ENCODE measurements at regions of chr12 and their contacts with region 1.

Region 1: GRCh38 chr12:30754709-30755394 is at the start of gene CAPRIN2:
- DNase-seq: peak; percentile 96
- H3K4me3 ChIP-seq: peak within 1 kb of the TSS; percentile 84 to 94 (median 86)
- H3K27ac ChIP-seq: peak within 1 kb of the TSS; percentile 39
- H3K4me1 ChIP-seq: peaks cover 17% of the 10 kb centered on the region
- H3K27me3 ChIP-seq: no peaks in the 10 kb centered on the region
- CTCF ChIP-seq: peak; percentile 2 to 53
- total RNA-seq, gene CAPRIN2: 17.2 to 38.0 TPM

Region 2: DNA sequence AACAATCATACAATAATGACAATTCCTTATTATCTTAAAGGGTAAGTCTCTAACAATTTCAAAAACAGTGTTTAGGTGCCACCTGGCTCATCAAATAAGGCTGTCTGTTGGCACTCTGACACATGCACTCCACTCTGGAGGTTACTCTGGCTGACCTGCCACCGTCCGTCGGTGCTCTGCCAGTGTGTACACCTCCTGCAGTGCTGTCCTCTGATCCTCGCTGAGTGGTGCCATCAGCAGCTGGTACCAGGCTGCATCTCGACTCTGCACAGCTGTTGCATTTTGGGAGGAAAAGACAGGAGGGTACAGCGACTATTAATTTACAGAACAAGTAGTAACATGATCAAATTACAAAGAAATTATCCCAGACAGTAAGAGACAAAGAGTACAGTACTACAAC is 123.1 kb before region 1 on chr12:
- CTCF ChIA-PET with region 1: no interaction called
- dilution Hi-C with region 1: no loop called
- in situ Hi-C with region 1: no loop called
- intact Hi-C with region 1: no loop called
- DNase-seq: no peak
- H3K4me3 ChIP-seq: no peak overlapping the region
- H3K27ac ChIP-seq: no peak overlapping the region
- H3K4me1 ChIP-seq: no peaks in the 10 kb centered on the region
- H3K27me3 ChIP-seq: no peaks in the 10 kb centered on the region
- CTCF ChIP-seq: no peak

Region 3: GRCh38 chr12:30695199-30696103 is 59.4 kb before region 1 on chr12 and contains the start of gene IPO8:
- CTCF ChIA-PET with region 1: interaction called, 6 read pairs
- dilution Hi-C with region 1: no loop called
- in situ Hi-C with region 1: no loop called
- intact Hi-C with region 1: loop called (anchors 2 kb)
- DNase-seq: peak; percentile 90
- H3K4me3 ChIP-seq: peak within 1 kb of the TSS; percentile 68 to 99 (median 76)
- H3K27ac ChIP-seq: peak within 1 kb of the TSS; percentile 55
- H3K4me1 ChIP-seq: peaks cover 24% of the 10 kb centered on the region
- H3K27me3 ChIP-seq: no peaks in the 10 kb centered on the region
- CTCF ChIP-seq: peak in 1 of 2 donors; percentile 47
- total RNA-seq, gene IPO8: 21.5 to 40.7 TPM

Region 4: DNA sequence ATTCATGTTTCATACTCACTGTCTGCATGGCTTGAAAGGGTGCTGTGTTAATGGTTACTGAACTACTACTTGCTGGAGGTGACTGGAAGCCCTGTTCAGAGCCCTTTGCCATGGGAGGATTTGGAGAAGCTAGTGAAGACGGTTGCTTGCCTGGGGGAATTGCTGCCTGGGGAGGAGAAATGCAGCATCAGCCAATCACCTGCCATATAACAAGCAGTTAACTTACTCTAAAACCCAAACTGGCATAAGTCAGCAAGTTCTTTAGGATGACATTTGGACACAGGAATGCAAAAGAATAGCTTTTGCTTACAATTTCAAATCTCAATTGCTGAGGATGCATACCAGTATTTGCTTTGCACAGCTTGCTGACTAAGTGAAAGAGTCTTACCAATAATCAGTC is 35.8 kb before region 1 on chr12:
- CTCF ChIA-PET with region 1: no interaction called
- dilution Hi-C with region 1: no loop called
- in situ Hi-C with region 1: no loop called
- intact Hi-C with region 1: loop called (anchors 5 kb)
- DNase-seq: peak; percentile 14
- H3K4me3 ChIP-seq: no peak overlapping the region
- H3K27ac ChIP-seq: no peak overlapping the region
- H3K4me1 ChIP-seq: no peaks in the 10 kb centered on the region
- H3K27me3 ChIP-seq: no peaks in the 10 kb centered on the region
- CTCF ChIP-seq: no peak